ENCODE measurements at regions of chr17 and their contacts with region 1.

Region 1: GRCh38 chr17:33154869-33155455 is 138.1 kb downstream of the ASIC2 start:
- DNase-seq: no peak
- ATAC-seq: no peak
- H3K4me3 ChIP-seq: no peak overlapping the region
- H3K27ac ChIP-seq: no peak overlapping the region
- H3K4me1 ChIP-seq: no peaks in the 10 kb centered on the region
- H3K27me3 ChIP-seq: peaks cover 0 to 3% of the 10 kb centered on the region in 2 donors
- CTCF ChIP-seq: no peak
- POLR2A ChIP-seq: no peak

Region 2: DNA sequence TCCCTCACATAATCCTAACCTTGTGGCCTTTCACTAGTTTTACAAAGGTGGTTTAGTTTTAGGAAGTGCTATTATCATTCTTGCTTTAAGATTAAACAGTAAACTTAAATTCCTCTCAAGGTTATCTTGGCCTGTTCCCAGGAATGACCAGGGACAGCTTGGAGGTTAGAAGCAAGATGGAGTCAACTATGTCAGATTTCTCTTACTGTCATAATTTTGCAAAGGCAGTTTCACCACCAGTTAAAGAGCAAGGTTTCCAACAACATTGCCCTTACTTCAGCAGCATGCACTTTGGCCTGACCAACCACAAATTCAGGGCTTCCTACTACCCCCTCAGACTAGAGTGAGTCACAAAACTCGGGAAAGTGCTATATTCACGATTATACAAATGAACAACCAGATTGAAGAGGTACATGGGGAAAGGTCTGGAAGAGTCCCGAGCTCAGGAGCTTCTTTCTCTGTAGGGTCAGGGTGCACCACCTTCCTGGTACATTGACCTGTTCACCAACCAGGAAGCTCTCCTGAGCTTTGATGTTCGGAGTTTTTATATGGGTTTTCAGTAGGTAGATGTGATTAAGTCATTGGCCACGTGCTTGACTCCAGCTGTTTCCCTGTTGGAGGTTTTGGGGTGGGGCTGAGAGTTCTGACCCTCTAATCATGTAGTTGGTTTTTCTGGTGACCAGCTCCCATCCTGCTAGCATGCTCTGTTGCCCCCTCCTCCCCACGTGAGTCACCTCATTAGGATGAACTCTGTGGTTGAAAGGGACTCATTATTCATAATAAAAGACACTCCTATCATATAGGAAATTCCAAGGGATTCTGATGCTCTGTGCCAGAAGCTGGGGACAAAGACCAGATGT is 993.2 kb before region 1 on chr17:
- intact Hi-C with region 1: no loop called
- DNase-seq: no peak
- ATAC-seq: no peak
- H3K4me3 ChIP-seq: no peak overlapping the region
- H3K27ac ChIP-seq: no peak overlapping the region
- H3K4me1 ChIP-seq: no peaks in the 10 kb centered on the region
- H3K27me3 ChIP-seq: no peaks in the 10 kb centered on the region
- CTCF ChIP-seq: no peak
- POLR2A ChIP-seq: no peak

Region 3: DNA sequence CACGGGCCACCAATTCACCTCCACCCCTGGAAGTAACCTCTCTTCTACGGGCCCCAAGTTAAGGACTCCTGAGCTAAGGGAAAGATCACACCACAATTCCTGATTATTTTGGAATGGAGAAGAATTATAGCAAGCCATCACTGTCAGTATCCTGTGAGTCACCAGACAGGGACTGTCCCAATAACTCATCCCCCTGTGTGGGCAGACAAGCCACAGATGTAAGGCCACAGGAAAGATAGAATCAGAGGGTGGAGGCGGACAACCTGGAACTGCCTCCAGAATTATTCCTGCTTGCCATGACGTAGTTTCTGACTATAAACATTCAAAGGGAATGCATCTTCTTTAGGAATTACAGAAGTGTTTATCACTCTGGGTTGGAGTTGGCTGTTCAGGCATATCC is 272.2 kb before region 1 on chr17:
- intact Hi-C with region 1: no loop called
- DNase-seq: peak in 1 of 4 donors; percentile 6
- ATAC-seq: no peak
- H3K4me3 ChIP-seq: no peak overlapping the region
- H3K27ac ChIP-seq: no peak overlapping the region
- H3K4me1 ChIP-seq: no peaks in the 10 kb centered on the region
- H3K27me3 ChIP-seq: no peaks in the 10 kb centered on the region
- CTCF ChIP-seq: no peak
- POLR2A ChIP-seq: no peak

Region 4: GRCh38 chr17:33292184-33292980 is 137.4 kb after region 1 on chr17:
- intact Hi-C with region 1: loop called (anchors 10 kb)
- DNase-seq: no peak
- ATAC-seq: no peak
- H3K4me3 ChIP-seq: no peak overlapping the region
- H3K27ac ChIP-seq: no peak overlapping the region
- H3K4me1 ChIP-seq: peaks cover 19% of the 10 kb centered on the region
- H3K27me3 ChIP-seq: peaks cover 0 to 17% of the 10 kb centered on the region in 2 donors
- CTCF ChIP-seq: no peak
- POLR2A ChIP-seq: no peak

Region 5: GRCh38 chr17:33506889-33507650 is 352.1 kb after region 1 on chr17:
- intact Hi-C with region 1: no loop called
- DNase-seq: no peak
- ATAC-seq: no peak
- H3K4me3 ChIP-seq: no peak overlapping the region
- H3K27ac ChIP-seq: no peak overlapping the region
- H3K4me1 ChIP-seq: no peaks in the 10 kb centered on the region
- H3K27me3 ChIP-seq: no peaks in the 10 kb centered on the region
- CTCF ChIP-seq: no peak
- POLR2A ChIP-seq: no peak